Activated T-helper 2 cell treated with anti-CD3 and anti-CD28 coated beads, Interferon-gamma antibody, Interleukin-2, Interleukin-4, amounts not matched to agents 10 μg/mL and 5 μg/mL and 100 μg/mL, durations not matched to agents 14 hours and 24 hours and 36 hours (primary cell): ENCODE measurements at regions of chr1 and their contacts with region 1.

Region 1: DNA sequence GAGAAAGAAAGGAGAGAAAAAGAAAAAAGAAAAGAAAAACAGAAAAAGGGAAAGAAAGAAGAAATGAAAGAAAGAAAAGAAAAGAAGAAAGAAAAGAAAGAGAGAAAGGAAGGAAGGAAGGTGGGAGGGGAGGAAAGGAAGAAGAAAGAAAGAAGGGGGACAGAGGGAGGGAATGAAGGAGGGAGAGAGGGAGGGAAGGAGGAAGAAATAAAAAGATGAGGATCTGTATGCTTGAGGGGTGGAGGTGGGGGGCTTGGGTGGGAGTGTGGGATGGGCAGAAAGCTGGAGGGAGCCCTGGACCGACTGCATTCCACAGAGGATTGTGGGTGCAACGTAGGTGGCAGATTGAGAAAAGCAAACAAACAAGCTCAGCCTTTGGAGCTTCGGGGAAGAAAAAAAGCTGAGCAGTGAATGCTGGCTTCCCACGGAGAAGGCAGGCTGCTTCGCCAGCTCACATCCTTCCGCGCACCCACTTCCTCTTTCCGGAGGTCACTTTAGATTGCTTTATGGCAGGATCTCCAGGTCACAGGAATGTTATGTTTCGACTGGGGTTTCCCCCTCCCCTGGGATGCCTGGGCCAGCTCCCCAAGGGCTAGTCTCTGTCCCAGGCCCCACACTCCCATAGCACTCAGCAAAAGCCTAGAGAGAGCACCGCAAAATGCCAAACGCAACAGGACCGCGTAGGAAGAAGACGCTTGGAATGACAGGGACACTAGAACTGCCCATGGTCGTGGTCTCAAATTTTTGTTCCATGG is 20.7 kb upstream of the LGALS8 start:
- DNase-seq: no peak
- H3K4me3 Mint-ChIP-seq: peak overlapping the region; percentile 41
- H3K27ac Mint-ChIP-seq: peak overlapping the region; percentile 39
- H3K4me1 Mint-ChIP-seq: peaks cover 11% of the 10 kb centered on the region
- H3K27me3 Mint-ChIP-seq: peaks cover 24% of the 10 kb centered on the region

Region 2: DNA sequence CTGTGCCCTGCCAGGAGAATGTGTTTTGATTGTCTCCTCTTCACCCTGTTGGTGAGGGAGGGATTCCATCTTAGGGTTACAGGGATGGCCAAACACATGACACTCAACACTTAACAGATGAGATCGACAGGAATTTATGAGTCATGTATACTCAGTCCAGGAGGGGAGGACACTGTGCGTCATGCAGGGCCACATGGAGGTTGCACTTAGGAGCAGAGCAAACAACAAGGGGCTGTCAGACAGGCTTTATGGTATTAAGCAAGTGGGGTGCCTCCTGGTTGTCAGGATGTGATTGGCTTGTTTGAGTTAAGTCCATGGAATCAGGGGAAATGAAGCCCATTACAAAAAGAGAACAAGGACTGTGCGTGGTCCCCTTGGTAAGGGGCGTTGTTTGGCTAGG is 82.0 kb before region 1 on chr1:
- intact Hi-C with region 1: loop called (anchors 5 kb)
- DNase-seq: no peak
- H3K4me3 Mint-ChIP-seq: no peak overlapping the region
- H3K27ac Mint-ChIP-seq: no peak overlapping the region
- H3K4me1 Mint-ChIP-seq: peaks cover 23% of the 10 kb centered on the region
- H3K27me3 Mint-ChIP-seq: no peaks in the 10 kb centered on the region

Region 3: GRCh38 chr1:236523701-236524141 is 20.7 kb after region 1 on chr1 and contains the start of gene LGALS8:
- intact Hi-C with region 1: no loop called
- DNase-seq: peak; percentile 80
- H3K4me3 Mint-ChIP-seq: peak within 1 kb of the TSS; percentile 98
- H3K27ac Mint-ChIP-seq: peak within 1 kb of the TSS; percentile 99
- H3K4me1 Mint-ChIP-seq: peaks cover 14% of the 10 kb centered on the region
- H3K27me3 Mint-ChIP-seq: peaks cover 18% of the 10 kb centered on the region
- total RNA-seq, gene LGALS8: 70.9 and 74.8 TPM in 2 replicates